B cell (primary cell): ENCODE measurements at regions of chrX and their contacts with region 1.

Region 1: DNA sequence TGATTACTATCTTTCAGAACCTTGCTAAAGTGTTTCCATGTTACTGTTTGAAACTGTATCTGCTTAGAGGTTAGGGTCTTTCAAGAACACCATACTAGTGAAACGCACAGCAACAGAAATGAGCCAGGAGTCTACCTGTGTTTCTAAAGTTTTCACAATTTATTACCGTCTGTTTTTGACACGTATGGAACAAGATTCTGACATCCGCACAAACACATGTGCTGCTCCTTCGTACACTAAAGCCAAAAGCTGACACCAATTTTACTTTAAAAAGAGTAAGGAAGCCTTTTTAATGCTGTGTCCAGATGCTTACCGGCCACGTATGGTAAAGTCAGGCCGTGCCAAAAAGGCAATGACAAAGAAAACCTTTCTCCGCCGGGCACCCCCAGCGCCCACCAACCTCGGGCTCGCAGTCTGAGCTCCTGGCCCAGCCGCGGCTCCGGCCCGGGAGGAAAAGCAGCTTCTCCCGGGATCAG is 532 bp downstream of the RPS4X start:
- DNase-seq: no peak
- ATAC-seq: no peak
- H3K4me3 ChIP-seq: peak overlapping the region; percentile 65 to 97 (median 93)
- H3K4me3 Mint-ChIP-seq: peak overlapping the region; percentile 88
- H3K27ac ChIP-seq: peak overlapping the region; percentile 80 to 89
- H3K27ac Mint-ChIP-seq: peak overlapping the region; percentile 90
- H3K4me1 ChIP-seq: peaks cover 14 to 16% of the 10 kb centered on the region in 2 donors
- H3K4me1 Mint-ChIP-seq: peaks cover 29% of the 10 kb centered on the region
- H3K27me3 ChIP-seq: peaks cover 0 to 3% (median 0%) of the 10 kb centered on the region in 4 experiments
- H3K27me3 Mint-ChIP-seq: no peaks in the 10 kb centered on the region
- CTCF ChIP-seq: no peak

Region 2: DNA sequence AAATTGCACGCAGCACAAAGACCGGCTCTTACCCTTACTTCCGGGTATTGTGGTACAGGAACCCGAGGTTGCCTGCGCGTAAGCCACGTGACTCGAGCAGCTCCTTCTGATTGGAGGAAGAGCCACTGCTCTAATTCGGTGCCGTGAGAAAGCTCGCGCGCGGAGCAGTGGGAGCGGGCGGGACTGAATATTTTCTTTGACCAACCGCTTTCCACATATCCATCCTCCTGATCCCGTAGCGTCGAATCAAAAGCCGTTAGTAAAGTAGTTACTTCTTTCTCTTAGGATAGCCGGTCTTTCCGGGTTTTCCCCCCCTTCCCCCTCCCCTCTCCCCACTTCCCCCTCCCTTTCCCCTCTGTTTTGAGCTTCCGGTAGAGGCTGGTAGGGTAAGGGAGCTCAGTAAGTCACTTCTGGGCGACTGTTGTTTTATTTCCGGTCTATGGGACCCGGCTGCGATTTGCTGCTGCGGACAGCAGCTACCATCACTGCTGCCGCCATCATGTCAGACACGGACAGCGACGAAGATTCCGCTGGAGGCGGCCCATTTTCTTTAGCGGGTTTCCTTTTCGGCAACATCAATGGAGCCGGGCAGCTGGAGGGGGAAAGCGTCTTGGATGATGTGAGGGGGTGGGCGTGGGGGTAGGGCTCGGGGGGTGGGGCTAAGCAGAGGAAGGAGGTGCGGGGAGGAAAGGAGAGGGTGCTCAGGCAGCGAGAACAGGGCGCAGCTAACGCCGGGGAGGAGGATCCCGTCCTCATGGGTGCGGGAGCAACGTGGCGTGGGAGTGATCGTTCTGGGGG is 910.4 kb before region 1 on chrX and contains the start of gene TAF1:
- CTCF ChIA-PET with region 1: no interaction called
- POLR2A ChIA-PET with region 1: no interaction called
- intact Hi-C with region 1: loop called (anchors 5 kb)
- DNase-seq: peak; percentile 94
- ATAC-seq: peak; percentile 90
- H3K4me3 ChIP-seq: peak within 1 kb of the TSS; percentile 67 to 78 (median 73)
- H3K4me3 Mint-ChIP-seq: peak within 1 kb of the TSS; percentile 97
- H3K27ac ChIP-seq: peak within 1 kb of the TSS; percentile 80 to 95
- H3K27ac Mint-ChIP-seq: peak within 1 kb of the TSS; percentile 99
- H3K4me1 ChIP-seq: peaks cover 12 to 24% of the 10 kb centered on the region in 2 donors
- H3K4me1 Mint-ChIP-seq: peaks cover 24% of the 10 kb centered on the region
- H3K27me3 ChIP-seq: no peaks in the 10 kb centered on the region
- H3K27me3 Mint-ChIP-seq: no peaks in the 10 kb centered on the region
- CTCF ChIP-seq: no peak
- total RNA-seq, gene TAF1: 93.5 and 97.5 TPM in 2 replicates

Region 3: DNA sequence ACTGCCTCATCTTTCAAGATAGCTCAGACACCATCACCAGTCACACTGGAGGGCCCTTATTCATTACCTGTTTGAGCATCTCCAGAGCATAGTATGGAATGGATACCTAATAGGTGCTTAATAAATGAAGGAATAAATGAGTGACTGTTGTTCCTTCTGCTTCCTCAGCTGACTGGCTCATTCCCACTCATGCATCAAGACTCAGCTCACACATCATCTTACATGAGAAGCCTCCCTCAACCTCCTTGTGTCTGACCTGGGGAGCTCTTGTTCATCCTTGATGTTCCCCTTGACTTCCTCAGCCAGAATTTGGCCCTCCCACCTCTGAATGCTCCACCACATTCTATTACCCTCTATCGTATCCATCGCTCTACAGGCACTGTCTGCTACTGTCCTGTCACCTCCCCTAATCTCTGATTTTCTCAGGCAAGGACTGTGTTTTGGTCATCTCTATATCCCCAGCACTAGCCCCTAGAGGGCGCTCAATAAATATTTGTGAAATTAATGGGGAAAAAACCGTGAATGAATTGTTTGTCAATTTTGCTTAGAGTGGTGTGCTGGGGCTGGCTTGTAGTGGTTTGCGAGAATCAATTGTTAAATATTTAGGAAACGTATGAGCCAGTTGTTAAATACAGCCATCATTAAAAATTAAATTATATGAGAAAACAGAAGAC is 277.5 kb before region 1 on chrX:
- CTCF ChIA-PET with region 1: interaction called, 13 read pairs
- POLR2A ChIA-PET with region 1: no interaction called
- intact Hi-C with region 1: loop called (anchors 1 kb)
- DNase-seq: peak; percentile 52
- ATAC-seq: peak; percentile 51
- H3K4me3 ChIP-seq: no peak overlapping the region
- H3K4me3 Mint-ChIP-seq: no peak overlapping the region
- H3K27ac ChIP-seq: no peak overlapping the region
- H3K27ac Mint-ChIP-seq: no peak overlapping the region
- H3K4me1 ChIP-seq: no peaks in the 10 kb centered on the region
- H3K4me1 Mint-ChIP-seq: no peaks in the 10 kb centered on the region
- H3K27me3 ChIP-seq: no peaks in the 10 kb centered on the region
- H3K27me3 Mint-ChIP-seq: peaks cover 3% of the 10 kb centered on the region
- CTCF ChIP-seq: peak; percentile 74

Region 4: DNA sequence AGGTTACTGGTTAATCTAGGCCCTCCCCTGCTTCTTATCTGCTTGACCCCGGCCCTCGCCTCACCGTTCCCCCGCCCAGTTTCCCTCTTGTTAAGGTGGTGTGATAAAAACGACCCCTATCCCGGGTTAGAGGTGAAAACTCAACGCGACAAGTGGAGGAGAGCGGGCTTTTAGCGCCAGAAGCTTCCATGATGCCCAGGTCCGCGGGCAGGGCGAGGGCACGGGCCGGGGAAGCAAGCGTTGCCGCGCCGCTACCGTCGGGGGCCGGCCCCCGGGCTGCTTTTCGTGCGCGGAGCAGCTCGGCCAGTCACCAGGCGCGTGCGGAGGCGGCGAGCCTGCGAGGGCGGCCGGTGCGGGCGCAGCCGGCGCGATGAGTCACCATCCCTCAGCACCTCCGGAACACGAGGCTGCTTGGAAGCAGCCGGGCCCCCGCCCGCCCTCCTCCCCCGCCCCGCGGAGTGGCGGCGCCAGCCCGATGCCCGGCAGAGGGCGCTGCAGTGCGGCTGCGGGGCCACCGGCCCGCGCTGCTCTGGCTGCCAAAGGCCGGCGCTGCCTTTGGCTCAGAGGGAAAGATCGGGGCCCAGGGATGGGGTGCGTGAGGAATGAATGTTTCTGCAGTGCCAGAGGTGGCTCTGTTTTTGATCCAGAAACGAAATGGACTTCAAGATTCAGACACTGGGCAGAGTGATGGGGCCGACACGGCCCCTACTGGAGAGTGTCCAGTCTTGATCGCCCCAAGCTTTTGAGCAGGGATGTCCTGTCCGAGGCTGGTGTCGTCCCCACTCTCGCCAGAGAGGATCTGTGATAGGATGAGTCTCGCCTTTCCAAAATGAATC is 258.0 kb before region 1 on chrX:
- CTCF ChIA-PET with region 1: interaction called, 3 read pairs
- POLR2A ChIA-PET with region 1: no interaction called
- intact Hi-C with region 1: loop called (anchors 2 kb)
- DNase-seq: peak; percentile 78
- ATAC-seq: peak; percentile 82
- H3K4me3 ChIP-seq: peak overlapping the region in 2 of 5 experiments; percentile 11 to 20
- H3K4me3 Mint-ChIP-seq: peak overlapping the region; percentile 29
- H3K27ac ChIP-seq: no peak overlapping the region
- H3K27ac Mint-ChIP-seq: no peak overlapping the region
- H3K4me1 ChIP-seq: peaks cover 13 to 22% of the 10 kb centered on the region in 2 donors
- H3K4me1 Mint-ChIP-seq: peaks cover 9% of the 10 kb centered on the region
- H3K27me3 ChIP-seq: peaks cover 0 to 26% (median 19%) of the 10 kb centered on the region in 4 experiments
- H3K27me3 Mint-ChIP-seq: peaks cover 9% of the 10 kb centered on the region
- CTCF ChIP-seq: peak; percentile 76

Region 5: GRCh38 chrX:72181178-72182125 is 95.1 kb before region 1 on chrX and contains the start of gene PIN4:
- CTCF ChIA-PET with region 1: interaction called, 4 read pairs
- POLR2A ChIA-PET with region 1: interaction called, 16 read pairs
- intact Hi-C with region 1: loop called (anchors 2 kb)
- DNase-seq: peak; percentile 93
- ATAC-seq: peak; percentile 90
- H3K4me3 ChIP-seq: peak within 1 kb of the TSS; percentile 73 to 84 (median 80)
- H3K4me3 Mint-ChIP-seq: no peak within 1 kb of the TSS
- H3K27ac ChIP-seq: peak within 1 kb of the TSS; percentile 68 to 79
- H3K27ac Mint-ChIP-seq: no peak within 1 kb of the TSS
- H3K4me1 ChIP-seq: peaks cover 14 to 17% of the 10 kb centered on the region in 2 donors
- H3K4me1 Mint-ChIP-seq: peaks cover 15% of the 10 kb centered on the region
- H3K27me3 ChIP-seq: no peaks in the 10 kb centered on the region
- H3K27me3 Mint-ChIP-seq: no peaks in the 10 kb centered on the region
- CTCF ChIP-seq: no peak
- total RNA-seq, gene PIN4: 13.4 and 16.0 TPM in 2 replicates

Region 6: DNA sequence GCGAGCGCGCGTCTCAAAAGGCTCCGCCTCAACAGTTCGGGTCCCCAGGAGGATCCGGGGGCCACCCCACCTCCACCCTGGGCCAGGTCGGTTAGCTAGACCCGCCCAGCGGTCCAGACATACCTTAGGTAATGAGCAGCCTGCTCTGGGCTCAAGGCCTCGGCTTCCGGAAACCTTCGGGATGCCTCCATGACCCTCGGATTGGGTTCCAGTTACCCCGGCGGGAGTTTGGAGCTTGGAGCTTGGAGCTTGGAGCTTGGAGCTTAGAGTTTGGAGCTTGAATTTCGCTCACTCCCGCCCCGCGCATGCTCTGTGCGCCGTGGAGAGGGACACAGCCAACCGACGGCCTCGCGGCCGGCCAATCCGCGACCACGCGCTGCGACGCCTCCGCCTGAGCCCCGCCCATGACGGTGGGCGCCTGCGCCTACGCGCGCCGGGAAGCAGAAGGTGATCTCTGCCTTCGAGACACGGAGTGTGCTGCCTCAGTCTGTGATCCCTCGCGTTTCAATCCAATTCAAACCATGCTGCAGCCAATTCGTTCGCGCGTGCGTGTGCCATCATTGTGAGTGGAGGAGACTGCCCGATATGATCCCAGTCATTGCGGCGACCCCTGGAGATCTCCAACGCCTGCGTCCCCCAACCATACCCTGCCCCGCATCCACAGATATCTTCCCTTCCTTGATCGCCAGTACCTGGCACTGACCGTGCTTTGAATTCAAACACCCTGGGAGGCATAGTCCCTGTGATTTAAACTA is 37.6 kb before region 1 on chrX and contains the start of gene ERCC6L:
- CTCF ChIA-PET with region 1: interaction called, 5 read pairs
- POLR2A ChIA-PET with region 1: no interaction called
- intact Hi-C with region 1: loop called (anchors 1 kb)
- DNase-seq: peak; percentile 85
- ATAC-seq: peak; percentile 99
- H3K4me3 ChIP-seq: peak within 1 kb of the TSS; percentile 16 to 59 (median 56)
- H3K4me3 Mint-ChIP-seq: peak within 1 kb of the TSS; percentile 92
- H3K27ac ChIP-seq: no peak within 1 kb of the TSS
- H3K27ac Mint-ChIP-seq: peak within 1 kb of the TSS; percentile 78
- H3K4me1 ChIP-seq: peaks cover 0 to 6% of the 10 kb centered on the region in 2 donors
- H3K4me1 Mint-ChIP-seq: peaks cover 6% of the 10 kb centered on the region
- H3K27me3 ChIP-seq: no peaks in the 10 kb centered on the region
- H3K27me3 Mint-ChIP-seq: no peaks in the 10 kb centered on the region
- CTCF ChIP-seq: no peak
- total RNA-seq, gene ERCC6L: 0.34 and 0.36 TPM in 2 replicates

Region 7: DNA sequence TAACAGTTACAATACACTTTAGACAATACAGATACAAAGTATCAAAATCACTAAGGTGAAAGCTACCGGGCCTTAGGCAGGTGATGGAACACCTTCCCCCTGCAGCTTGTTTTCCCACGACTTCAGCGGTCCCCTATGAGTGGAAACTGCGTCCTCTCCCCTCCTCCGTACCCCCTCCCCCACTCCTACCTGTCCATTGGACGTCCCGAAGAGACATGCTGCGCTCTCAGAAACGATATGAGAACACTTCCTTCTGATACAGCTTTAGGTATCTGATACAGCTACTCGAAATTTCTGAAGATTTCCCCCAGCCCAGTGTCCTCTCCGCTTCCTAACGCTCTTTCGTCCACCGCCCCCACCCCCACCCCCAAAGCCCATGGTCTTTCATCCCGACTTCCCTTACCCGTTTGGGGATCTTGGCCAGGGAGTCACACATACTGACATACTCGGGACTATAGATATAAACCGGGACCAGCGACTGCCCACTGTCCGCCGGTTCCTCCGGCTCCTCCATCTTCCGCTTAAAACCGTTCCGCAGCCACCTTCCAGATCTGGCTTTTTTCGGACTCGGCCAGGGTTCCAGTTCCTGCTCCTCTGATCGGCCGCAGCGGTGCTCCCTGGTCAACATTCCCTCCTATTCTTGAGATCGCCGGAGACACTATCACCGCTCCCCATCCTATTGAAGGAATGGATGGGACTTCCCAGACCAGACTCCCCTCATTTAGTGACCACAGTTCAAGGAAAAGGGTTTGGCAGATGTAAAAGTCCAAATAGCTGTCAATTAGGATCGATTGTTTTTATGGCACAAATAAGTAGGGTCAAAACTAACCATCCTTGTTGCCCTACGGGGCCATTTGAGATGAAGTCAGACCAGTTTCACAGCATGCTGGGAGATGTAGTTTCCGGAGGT is 296.0 kb after region 1 on chrX and contains the start of gene HDAC8:
- CTCF ChIA-PET with region 1: no interaction called
- POLR2A ChIA-PET with region 1: no interaction called
- intact Hi-C with region 1: loop called (anchors 2 kb)
- DNase-seq: peak; percentile 71
- ATAC-seq: peak; percentile 86
- H3K4me3 ChIP-seq: peak within 1 kb of the TSS; percentile 65 to 84 (median 82)
- H3K4me3 Mint-ChIP-seq: peak within 1 kb of the TSS; percentile 99
- H3K27ac ChIP-seq: peak within 1 kb of the TSS; percentile 50 to 75
- H3K27ac Mint-ChIP-seq: peak within 1 kb of the TSS; percentile 93
- H3K4me1 ChIP-seq: peaks cover 0 to 6% of the 10 kb centered on the region in 2 donors
- H3K4me1 Mint-ChIP-seq: peaks cover 12% of the 10 kb centered on the region
- H3K27me3 ChIP-seq: no peaks in the 10 kb centered on the region
- H3K27me3 Mint-ChIP-seq: peaks cover 18% of the 10 kb centered on the region
- CTCF ChIP-seq: no peak
- total RNA-seq, gene HDAC8: 41.9 and 47.0 TPM in 2 replicates